ENCODE measurements at regions of chr2 and their contacts with region 1.

Region 1: DNA sequence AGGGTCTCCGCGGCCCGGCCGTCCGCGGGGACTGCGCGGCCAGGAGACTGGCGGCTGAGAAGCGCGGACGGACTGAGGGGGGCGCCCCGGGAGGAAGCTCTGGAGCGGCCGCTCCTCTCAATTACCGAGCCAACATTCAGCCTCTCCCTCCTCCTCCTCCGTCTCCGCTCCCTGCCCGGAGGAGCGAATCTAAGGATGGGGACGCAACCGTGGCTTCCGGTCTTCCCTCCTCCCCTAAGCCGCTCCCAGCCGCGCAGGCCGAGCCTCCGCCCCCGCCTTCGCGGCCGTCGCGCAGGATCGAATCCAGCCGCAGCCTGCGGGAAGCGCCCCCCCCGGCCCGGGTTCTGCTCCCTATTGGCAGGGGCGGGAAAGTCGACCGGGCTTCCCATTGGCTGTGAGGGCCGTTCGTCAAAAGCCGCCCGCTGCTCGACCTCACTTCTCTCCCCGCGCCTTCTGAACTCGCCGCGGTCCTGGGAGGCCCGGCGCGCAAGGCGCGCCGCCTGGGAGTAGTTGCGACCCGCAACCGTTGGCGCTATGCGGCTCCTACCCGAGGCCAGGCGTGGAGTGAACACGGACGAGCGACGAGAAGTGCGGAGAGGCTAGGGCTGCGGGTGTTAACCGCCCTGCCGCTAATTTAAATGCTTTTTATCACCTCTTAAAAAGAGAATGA is at the start of gene HNRNPLL:
- DNase-seq: peak; percentile 98 to 99
- H3K4me3 ChIP-seq: peak within 1 kb of the TSS; percentile 70 to 86 (median 82)
- H3K27ac ChIP-seq: peak within 1 kb of the TSS; percentile 97 to 99 (median 98)
- H3K4me1 ChIP-seq: peaks cover 25 to 52% (median 39%) of the 10 kb centered on the region in 4 donors
- H3K27me3 ChIP-seq: no peaks in the 10 kb centered on the region
- CTCF ChIP-seq: no peak
- EP300 ChIP-seq: no peak
- POLR2A ChIP-seq: peak in 2 of 4 donors; percentile 90 to 92
- total RNA-seq, gene HNRNPLL: 22.9 to 97.9 (median 39.1) TPM

Region 2: GRCh38 chr2:38146275-38146906 is 456.5 kb before region 1 on chr2:
- intact Hi-C with region 1: no loop called
- DNase-seq: peak in 1 of 2 donors; percentile 49
- H3K4me3 ChIP-seq: no peak overlapping the region
- H3K27ac ChIP-seq: peak overlapping the region; percentile 22 to 88 (median 86)
- H3K4me1 ChIP-seq: peaks cover 0 to 33% (median 19%) of the 10 kb centered on the region in 4 donors
- H3K27me3 ChIP-seq: no peaks in the 10 kb centered on the region
- CTCF ChIP-seq: no peak
- EP300 ChIP-seq: no peak
- POLR2A ChIP-seq: no peak

Region 3: DNA sequence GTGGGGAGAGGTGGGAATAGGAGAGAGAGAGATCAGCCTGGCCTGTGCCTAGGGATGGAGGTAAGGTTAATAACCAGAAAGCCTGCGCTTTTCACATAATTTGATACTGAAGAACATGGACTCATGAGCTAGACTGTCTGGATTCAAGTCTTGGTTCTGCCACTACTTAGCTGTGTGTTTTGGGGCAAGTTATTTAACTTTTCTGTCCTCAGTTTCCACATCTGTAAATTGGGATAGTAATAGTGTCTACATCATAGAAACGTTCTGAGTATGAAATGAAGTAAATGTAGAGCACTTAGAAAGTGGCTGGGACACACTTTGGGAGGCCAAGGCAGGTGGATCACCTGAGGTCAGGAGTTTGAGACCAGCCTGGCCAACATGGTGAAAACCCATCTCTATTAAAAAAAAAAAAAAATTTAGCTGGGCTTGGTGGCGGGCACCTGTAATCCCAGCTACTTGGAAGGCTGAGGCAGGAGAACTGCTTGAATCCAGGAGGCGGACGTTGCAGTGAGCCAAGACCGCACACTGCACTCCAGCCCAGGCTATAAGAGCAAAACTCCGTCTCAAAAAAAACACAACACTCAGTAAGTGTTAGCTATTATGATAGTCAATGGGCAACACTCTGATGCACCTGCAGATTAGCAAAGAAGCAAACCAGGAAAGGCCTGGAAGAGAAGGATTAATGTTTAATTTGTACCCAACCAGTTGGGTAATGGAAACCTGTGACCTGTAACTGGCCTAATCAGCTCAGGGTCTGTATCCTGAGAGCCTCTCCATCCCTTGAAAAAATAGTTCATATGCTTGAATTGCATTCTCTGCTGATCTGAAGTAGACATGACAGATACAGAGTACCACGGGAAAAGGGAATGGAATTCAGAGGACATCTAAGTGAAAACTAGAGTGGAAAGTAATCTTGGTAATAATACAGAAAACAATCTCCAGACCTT is 69.9 kb after region 1 on chr2:
- intact Hi-C with region 1: loop called (anchors 10 kb)
- DNase-seq: no peak
- H3K4me3 ChIP-seq: no peak overlapping the region
- H3K27ac ChIP-seq: no peak overlapping the region
- H3K4me1 ChIP-seq: peaks cover 0 to 11% (median 4%) of the 10 kb centered on the region in 4 donors
- H3K27me3 ChIP-seq: no peaks in the 10 kb centered on the region
- CTCF ChIP-seq: no peak
- EP300 ChIP-seq: no peak
- POLR2A ChIP-seq: no peak

Region 4: GRCh38 chr2:38960609-38961320 is 357.9 kb after region 1 on chr2:
- intact Hi-C with region 1: no loop called
- DNase-seq: peak in 1 of 2 donors; percentile 7
- H3K4me3 ChIP-seq: peak overlapping the region; percentile 39 to 55 (median 50)
- H3K27ac ChIP-seq: peak overlapping the region in 1 of 5 donors; percentile 47
- H3K4me1 ChIP-seq: peaks cover 7 to 13% (median 10%) of the 10 kb centered on the region in 4 donors
- H3K27me3 ChIP-seq: peaks cover 0 to 9% (median 8%) of the 10 kb centered on the region in 3 donors
- CTCF ChIP-seq: no peak
- EP300 ChIP-seq: no peak
- POLR2A ChIP-seq: no peak

Measured in stomach (tissue), 19 donors.